ENCODE measurements at regions of chr2 and their contacts with region 1.

Region 1: DNA sequence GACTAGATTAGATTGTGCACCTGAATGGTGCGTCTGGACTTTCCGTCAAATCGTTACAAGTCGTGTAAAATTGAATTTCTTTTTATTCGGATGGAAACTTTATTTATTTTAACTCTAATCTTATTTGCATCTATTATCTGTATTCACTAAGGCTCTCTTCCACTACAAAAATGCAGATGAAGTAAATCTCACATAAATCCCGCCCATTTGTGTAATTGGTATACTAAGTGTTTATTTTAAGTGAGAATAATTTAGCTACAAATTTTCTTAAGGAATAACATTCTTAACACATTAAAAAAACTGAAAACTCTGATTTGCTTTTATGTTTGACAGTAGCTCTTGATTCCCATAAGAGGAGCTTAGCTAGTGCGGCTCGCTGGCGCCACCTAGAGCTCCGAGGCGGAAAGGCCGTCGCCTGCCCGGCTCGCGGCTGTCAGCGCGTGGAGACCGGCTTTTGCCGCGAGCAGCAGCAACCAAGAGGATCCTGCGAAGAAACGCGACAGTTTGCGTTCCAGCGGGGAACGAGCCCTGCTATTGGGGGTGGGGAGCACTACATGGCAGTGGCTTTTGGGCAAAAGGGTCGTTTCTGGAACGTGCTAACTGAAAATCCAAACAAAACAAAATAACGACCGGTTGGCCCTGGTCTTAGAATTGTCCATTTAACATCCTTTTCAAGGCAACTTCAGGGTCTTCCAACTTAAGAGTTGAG is 6.7 kb downstream of the SP9 start:
- DNase-seq: peak; percentile 47
- H3K4me3 ChIP-seq: peak overlapping the region; percentile 33; the same call in 1 of the 2 replicates
- H3K27ac ChIP-seq: no peak overlapping the region
- H3K27me3 ChIP-seq: peaks cover 76% of the 10 kb centered on the region
- CTCF ChIP-seq: peak; percentile 98

Region 2: GRCh38 chr2:173402405-173402974 is 939.0 kb before region 1 on chr2:
- CTCF ChIA-PET with region 1: interaction called, 19 read pairs
- POLR2A ChIA-PET with region 1: no interaction called
- DNase-seq: peak; percentile 59
- H3K4me3 ChIP-seq: peak overlapping the region; percentile 35; the same call in 1 of the 2 replicates
- H3K27ac ChIP-seq: no peak overlapping the region
- H3K27me3 ChIP-seq: peaks cover 52% of the 10 kb centered on the region
- CTCF ChIP-seq: peak; percentile 95

Region 3: GRCh38 chr2:173448938-173449471 is 892.4 kb before region 1 on chr2:
- CTCF ChIA-PET with region 1: interaction called, 13 read pairs
- POLR2A ChIA-PET with region 1: no interaction called
- DNase-seq: peak; percentile 42
- H3K4me3 ChIP-seq: peak overlapping the region; percentile 38
- H3K27ac ChIP-seq: no peak overlapping the region
- H3K27me3 ChIP-seq: peaks cover 19% of the 10 kb centered on the region
- CTCF ChIP-seq: peak; percentile 90

Region 4: DNA sequence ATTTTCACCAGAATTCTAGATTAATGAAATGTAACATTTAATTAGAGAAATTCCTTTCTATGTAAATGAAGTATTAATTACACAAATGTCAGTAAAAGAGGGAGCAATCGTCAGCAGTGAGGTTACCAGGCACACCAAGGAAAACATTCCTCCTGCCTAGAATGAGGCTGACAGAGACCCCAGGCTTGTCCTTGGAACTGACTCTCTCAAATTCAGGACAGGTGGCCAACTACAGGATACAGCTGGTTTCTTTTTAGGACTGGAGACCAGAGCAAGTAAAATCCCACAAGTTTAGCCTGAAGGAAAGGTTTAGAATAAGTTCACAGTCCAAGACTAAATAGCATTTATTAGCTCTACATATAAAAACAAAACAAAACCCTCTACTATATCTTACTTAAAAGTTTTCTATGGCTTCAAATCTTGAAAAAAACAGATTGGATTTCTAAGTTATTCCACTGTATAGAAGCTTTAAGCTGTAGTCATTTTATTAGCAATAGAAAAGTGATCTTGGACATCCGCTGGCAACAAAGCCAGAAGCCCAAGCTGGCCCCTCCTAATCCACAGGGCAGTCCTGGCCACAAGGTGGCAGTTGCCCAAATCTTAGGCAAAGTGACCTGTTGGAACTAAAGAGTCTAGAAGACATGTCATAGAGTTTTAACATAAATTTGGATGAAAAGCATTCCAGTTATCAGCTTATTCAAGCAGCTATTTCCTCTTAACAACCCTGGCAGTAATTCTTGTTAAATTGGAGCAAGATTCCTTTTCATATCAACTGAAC is 457.2 kb before region 1 on chr2:
- CTCF ChIA-PET with region 1: interaction called, 14 read pairs
- POLR2A ChIA-PET with region 1: no interaction called
- DNase-seq: no peak
- H3K4me3 ChIP-seq: no peak overlapping the region
- H3K27ac ChIP-seq: no peak overlapping the region
- H3K27me3 ChIP-seq: peaks cover 12% of the 10 kb centered on the region
- CTCF ChIP-seq: peak; percentile 60

Region 5: GRCh38 chr2:174325373-174326160 is 15.9 kb before region 1 on chr2:
- CTCF ChIA-PET with region 1: interaction called, 10 read pairs
- POLR2A ChIA-PET with region 1: no interaction called
- DNase-seq: no peak
- H3K4me3 ChIP-seq: peak overlapping the region; percentile 52
- H3K27ac ChIP-seq: no peak overlapping the region
- H3K27me3 ChIP-seq: peaks cover 71% of the 10 kb centered on the region
- CTCF ChIP-seq: no peak

Measured in AG04450 (cell line).